ENCODE measurements at regions of chr16 and their contacts with region 1.

Region 1: DNA sequence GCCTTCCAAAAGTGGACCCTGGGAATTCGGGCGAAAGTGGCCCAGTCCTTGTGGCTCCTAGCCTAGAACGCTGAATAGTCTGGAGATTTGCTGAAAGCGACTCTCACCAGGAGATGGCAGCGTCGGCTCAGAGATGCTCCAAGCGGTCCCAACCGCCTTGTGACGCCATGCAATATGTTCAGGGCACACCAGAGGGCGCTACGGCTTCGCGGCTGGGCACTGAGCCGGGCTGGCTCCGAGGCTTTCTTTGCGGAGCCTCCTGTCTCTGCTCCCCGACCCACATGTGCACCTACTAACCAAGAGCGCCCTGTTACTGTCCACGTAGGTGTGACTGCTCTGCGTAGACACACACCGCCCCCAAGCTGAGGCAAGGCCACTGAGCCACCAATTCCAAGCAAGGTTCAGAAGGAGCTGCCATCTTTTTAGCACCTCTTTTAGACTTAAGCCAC is 36.9 kb downstream of the SYCE1L start:
- DNase-seq: peak; percentile 80 to 93 (median 85)
- ATAC-seq: peak; percentile 99
- H3K4me3 ChIP-seq: peak overlapping the region; percentile 1
- H3K4me3 Mint-ChIP-seq: peak overlapping the region; percentile 57
- H3K27ac ChIP-seq: no peak overlapping the region
- H3K27ac Mint-ChIP-seq: no peak overlapping the region
- H3K4me1 ChIP-seq: peaks cover 8% of the 10 kb centered on the region
- H3K4me1 Mint-ChIP-seq: peaks cover 7% of the 10 kb centered on the region
- H3K27me3 ChIP-seq: peaks cover 3 to 10% of the 10 kb centered on the region in 2 experiments
- H3K27me3 Mint-ChIP-seq: peaks cover 27% of the 10 kb centered on the region
- CTCF ChIP-seq: peak; percentile 100

Region 2: DNA sequence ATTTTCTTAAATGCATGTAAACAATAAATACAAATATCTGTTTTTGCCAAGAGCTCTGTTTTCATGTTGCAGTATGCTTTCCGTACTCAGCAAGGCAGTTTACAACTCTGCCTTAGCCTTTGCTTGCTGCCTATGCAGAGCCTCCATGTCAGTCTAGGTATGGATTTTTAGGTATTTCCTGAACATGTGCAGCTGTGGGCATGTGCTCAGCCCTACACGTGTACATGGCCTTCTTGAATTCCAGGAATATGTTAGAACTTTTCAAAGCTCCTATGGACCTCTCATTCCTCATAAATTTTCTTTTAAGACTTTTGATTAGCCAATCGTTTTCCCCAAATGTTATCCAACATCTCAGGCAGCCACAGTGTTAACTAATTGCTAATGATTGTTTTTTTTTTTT is 26.9 kb after region 1 on chr16:
- CTCF ChIA-PET with region 1: no interaction called
- POLR2A ChIA-PET with region 1: no interaction called
- intact Hi-C with region 1: no loop called
- DNase-seq: no peak
- ATAC-seq: no peak
- H3K4me3 ChIP-seq: no peak overlapping the region
- H3K4me3 Mint-ChIP-seq: no peak overlapping the region
- H3K27ac ChIP-seq: no peak overlapping the region
- H3K27ac Mint-ChIP-seq: no peak overlapping the region
- H3K4me1 ChIP-seq: no peaks in the 10 kb centered on the region
- H3K4me1 Mint-ChIP-seq: no peaks in the 10 kb centered on the region
- H3K27me3 ChIP-seq: peaks cover 0 to 2% of the 10 kb centered on the region in 2 experiments
- H3K27me3 Mint-ChIP-seq: peaks cover 39% of the 10 kb centered on the region
- CTCF ChIP-seq: no peak

Region 3: DNA sequence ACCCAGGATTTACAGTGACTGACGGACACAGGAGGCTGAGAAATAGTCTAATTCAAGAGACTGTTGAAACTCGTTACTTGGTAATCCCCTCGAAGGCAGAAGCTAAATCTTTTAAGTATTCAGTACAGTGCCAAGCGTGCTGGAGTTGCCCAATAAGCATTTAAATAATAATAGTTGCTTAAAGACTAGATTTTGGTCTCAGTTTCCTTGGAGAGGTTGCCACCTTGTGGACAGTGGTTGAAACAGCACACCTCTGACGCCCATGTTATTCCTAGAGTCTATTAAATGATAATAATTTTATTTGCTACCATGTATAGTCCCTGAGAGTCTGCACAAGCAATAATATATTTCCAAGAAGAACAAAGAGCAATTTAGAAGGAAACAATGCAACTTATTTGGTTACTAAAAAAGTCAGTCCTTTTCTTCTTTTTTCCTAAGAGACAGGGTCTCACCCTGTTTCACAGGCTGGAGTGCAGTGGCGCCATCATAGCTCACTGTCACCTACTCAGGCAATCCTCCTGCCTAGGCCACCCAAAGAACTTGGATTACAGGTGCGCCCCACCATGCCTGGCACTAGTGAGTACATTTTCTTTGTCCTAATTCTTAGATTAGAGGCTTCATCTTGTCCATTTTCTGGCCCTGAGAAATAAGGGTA is 348.2 kb after region 1 on chr16:
- CTCF ChIA-PET with region 1: interaction called, 15 read pairs
- POLR2A ChIA-PET with region 1: no interaction called
- intact Hi-C with region 1: loop called (anchors 1 kb)
- DNase-seq: peak in 12 of 14 experiments; percentile 8 to 68 (median 20)
- ATAC-seq: no peak
- H3K4me3 ChIP-seq: no peak overlapping the region
- H3K4me3 Mint-ChIP-seq: no peak overlapping the region
- H3K27ac ChIP-seq: no peak overlapping the region
- H3K27ac Mint-ChIP-seq: no peak overlapping the region
- H3K4me1 ChIP-seq: no peaks in the 10 kb centered on the region
- H3K4me1 Mint-ChIP-seq: no peaks in the 10 kb centered on the region
- H3K27me3 ChIP-seq: peaks cover 4 to 9% of the 10 kb centered on the region in 2 experiments
- H3K27me3 Mint-ChIP-seq: peaks cover 39% of the 10 kb centered on the region
- CTCF ChIP-seq: peak; percentile 83

Region 4: GRCh38 chr16:77898671-77899211 is 662.7 kb after region 1 on chr16:
- CTCF ChIA-PET with region 1: no interaction called
- POLR2A ChIA-PET with region 1: no interaction called
- intact Hi-C with region 1: no loop called
- DNase-seq: no peak
- ATAC-seq: no peak
- H3K4me3 ChIP-seq: no peak overlapping the region
- H3K4me3 Mint-ChIP-seq: no peak overlapping the region
- H3K27ac ChIP-seq: no peak overlapping the region
- H3K27ac Mint-ChIP-seq: no peak overlapping the region
- H3K4me1 ChIP-seq: no peaks in the 10 kb centered on the region
- H3K4me1 Mint-ChIP-seq: no peaks in the 10 kb centered on the region
- H3K27me3 ChIP-seq: peaks cover 0 to 3% of the 10 kb centered on the region in 2 experiments
- H3K27me3 Mint-ChIP-seq: peaks cover 10% of the 10 kb centered on the region
- CTCF ChIP-seq: no peak